ENCODE measurements at regions of chr17 and their contacts with region 1.

Region 1: DNA sequence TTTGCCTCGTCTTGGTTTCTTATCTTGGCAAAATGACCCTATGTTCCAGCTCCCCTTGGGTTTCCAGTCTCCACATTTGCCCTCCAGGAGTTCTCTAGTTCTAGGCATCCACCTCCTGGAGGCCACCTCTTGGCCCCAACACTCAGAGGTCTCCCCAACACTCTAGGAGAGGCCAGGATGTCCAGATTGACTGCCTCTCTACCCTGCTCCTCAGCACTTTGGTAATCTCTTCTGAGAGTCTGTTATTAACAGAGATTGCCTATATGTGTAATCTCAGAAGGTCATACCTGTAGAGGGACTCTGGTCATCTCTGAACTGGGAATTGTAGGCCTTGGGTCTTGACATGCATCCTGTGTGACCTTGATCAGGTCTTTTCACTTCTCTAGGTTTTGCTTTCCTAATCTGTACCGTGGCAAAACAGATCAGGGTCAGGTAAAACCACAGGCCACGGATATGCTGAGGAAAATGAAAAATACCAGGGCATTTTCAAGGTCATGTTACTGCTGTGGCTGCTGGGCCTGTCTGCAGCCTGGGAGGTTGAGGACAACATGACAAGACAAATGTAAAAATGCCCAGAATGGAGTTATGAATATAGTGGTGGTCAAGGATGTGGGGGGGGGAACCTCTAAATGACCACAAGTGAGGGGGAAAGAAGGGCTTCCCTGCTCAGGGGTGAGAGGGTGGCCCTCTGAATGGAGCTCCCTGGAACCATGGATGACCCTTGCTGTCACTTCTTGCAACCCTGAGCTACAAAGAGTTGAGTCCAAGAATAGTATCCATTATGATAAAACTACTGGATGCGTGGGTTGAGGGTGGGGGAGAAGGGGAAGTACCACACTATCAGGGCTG is 5.0 kb upstream of the CCL4L2 start:
- DNase-seq: no peak
- ATAC-seq: no peak
- H3K4me3 Mint-ChIP-seq: no peak overlapping the region
- H3K27ac Mint-ChIP-seq: peak overlapping the region; percentile 65
- H3K4me1 Mint-ChIP-seq: peaks cover 73% of the 10 kb centered on the region
- H3K27me3 Mint-ChIP-seq: peaks cover 2% of the 10 kb centered on the region

Region 2: GRCh38 chr17:35788504-35789368 is 417.1 kb before region 1 on chr17:
- CTCF ChIA-PET with region 1: no interaction called
- DNase-seq: no peak
- ATAC-seq: no peak
- H3K4me3 Mint-ChIP-seq: no peak overlapping the region
- H3K27ac Mint-ChIP-seq: no peak overlapping the region
- H3K4me1 Mint-ChIP-seq: no peaks in the 10 kb centered on the region
- H3K27me3 Mint-ChIP-seq: peaks cover 46% of the 10 kb centered on the region

Region 3: DNA sequence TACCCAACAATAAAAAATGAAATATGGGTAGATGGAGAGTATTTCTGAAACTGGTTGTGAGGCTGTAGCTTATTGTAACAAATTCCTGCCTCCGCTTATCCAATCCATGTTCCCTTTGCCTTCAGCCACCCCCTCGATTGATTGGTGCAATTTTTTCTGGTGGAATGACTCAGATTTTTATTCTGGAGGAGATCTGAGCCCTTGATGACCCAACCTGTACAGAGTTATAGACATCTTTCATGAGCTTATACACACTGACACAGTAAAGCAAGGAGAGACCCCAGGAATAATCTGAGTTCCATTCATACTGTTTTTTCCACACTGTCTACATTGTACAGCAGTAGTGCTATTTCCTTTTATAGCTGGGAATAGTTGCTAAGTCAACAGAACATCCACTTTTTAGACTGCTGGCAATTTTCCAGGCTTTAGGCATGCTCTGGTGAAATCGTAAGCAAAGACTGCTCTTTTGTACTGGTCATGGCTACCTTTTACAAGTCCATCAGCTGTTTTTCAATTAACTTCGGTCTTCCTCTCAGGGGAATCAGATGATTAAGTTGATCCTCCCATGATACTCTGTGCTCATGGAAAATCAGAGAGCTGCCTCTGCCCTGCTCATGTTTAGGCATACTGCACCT is 72.1 kb before region 1 on chr17:
- CTCF ChIA-PET with region 1: no interaction called
- DNase-seq: no peak
- ATAC-seq: no peak
- H3K4me3 Mint-ChIP-seq: no peak overlapping the region
- H3K27ac Mint-ChIP-seq: no peak overlapping the region
- H3K4me1 Mint-ChIP-seq: no peaks in the 10 kb centered on the region
- H3K27me3 Mint-ChIP-seq: peaks cover 7% of the 10 kb centered on the region

Region 4: GRCh38 chr17:36195434-36196130 is 10.3 kb before region 1 on chr17:
- CTCF ChIA-PET with region 1: interaction called, 11 read pairs
- DNase-seq: peak; percentile 46
- ATAC-seq: no peak
- H3K4me3 Mint-ChIP-seq: peak overlapping the region; percentile 25
- H3K27ac Mint-ChIP-seq: peak overlapping the region; percentile 85
- H3K4me1 Mint-ChIP-seq: peaks cover 84% of the 10 kb centered on the region
- H3K27me3 Mint-ChIP-seq: peaks cover 2% of the 10 kb centered on the region

Region 5: GRCh38 chr17:36443777-36444176 is 237.9 kb after region 1 on chr17:
- CTCF ChIA-PET with region 1: no interaction called
- DNase-seq: no peak
- ATAC-seq: no peak
- H3K4me3 Mint-ChIP-seq: no peak overlapping the region
- H3K27ac Mint-ChIP-seq: no peak overlapping the region
- H3K4me1 Mint-ChIP-seq: no peaks in the 10 kb centered on the region
- H3K27me3 Mint-ChIP-seq: no peaks in the 10 kb centered on the region

Measured in activated CD8-positive, alpha-beta memory T cell treated with anti-CD3 and anti-CD28 coated beads, Interleukin-2, amount 10 ng/mL, durations not matched to agents 7 days and 5 days (primary cell).